WTC11 (cell line): ENCODE measurements at regions of chr1 and their contacts with region 1.

Region 1: GRCh38 chr1:226201029-226201593 is 14.6 kb upstream of the ACBD3 start:
- DNase-seq: peak; percentile 60
- ATAC-seq: peak; percentile 75
- H3K4me3 Mint-ChIP-seq: no peak overlapping the region
- H3K27ac Mint-ChIP-seq: no peak overlapping the region
- H3K4me1 Mint-ChIP-seq: peaks cover 19% of the 10 kb centered on the region
- H3K27me3 Mint-ChIP-seq: no peaks in the 10 kb centered on the region; the same call in 1 of the 2 replicates
- CTCF ChIP-seq: no peak

Region 2: GRCh38 chr1:225944951-225945350 is 256.2 kb before region 1 on chr1:
- CTCF ChIA-PET with region 1: no interaction called
- POLR2A ChIA-PET with region 1: no interaction called
- DNase-seq: no peak
- ATAC-seq: no peak
- H3K4me3 Mint-ChIP-seq: no peak overlapping the region
- H3K27ac Mint-ChIP-seq: peak overlapping the region; percentile 93
- H3K4me1 Mint-ChIP-seq: peaks cover 86% of the 10 kb centered on the region
- H3K27me3 Mint-ChIP-seq: peaks cover 94% of the 10 kb centered on the region
- CTCF ChIP-seq: no peak

Region 3: DNA sequence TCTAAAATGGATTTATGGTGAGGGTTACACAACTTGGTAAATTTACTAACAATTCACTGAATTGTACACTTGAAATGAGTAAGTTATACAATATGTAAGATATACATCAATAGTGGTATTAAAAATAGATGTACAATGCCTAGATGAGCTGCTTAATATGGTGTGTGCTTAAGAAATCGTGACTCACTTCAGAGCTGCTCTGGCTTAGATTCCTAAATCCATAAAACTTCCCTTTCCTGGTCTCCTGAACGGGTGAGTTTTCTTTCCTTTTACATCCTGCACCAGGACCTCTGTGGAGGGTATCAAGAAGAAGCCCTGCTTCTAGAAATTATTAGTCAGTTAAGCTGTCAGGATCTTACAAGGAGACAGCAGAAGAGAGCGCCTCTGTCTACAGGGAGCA is 108.1 kb before region 1 on chr1:
- CTCF ChIA-PET with region 1: no interaction called
- POLR2A ChIA-PET with region 1: no interaction called
- DNase-seq: no peak
- ATAC-seq: no peak
- H3K4me3 Mint-ChIP-seq: no peak overlapping the region
- H3K27ac Mint-ChIP-seq: no peak overlapping the region
- H3K4me1 Mint-ChIP-seq: peaks cover 6% of the 10 kb centered on the region; the same call in 1 of the 2 replicates
- H3K27me3 Mint-ChIP-seq: peaks cover 3% of the 10 kb centered on the region; the same call in 1 of the 2 replicates
- CTCF ChIP-seq: no peak

Region 4: DNA sequence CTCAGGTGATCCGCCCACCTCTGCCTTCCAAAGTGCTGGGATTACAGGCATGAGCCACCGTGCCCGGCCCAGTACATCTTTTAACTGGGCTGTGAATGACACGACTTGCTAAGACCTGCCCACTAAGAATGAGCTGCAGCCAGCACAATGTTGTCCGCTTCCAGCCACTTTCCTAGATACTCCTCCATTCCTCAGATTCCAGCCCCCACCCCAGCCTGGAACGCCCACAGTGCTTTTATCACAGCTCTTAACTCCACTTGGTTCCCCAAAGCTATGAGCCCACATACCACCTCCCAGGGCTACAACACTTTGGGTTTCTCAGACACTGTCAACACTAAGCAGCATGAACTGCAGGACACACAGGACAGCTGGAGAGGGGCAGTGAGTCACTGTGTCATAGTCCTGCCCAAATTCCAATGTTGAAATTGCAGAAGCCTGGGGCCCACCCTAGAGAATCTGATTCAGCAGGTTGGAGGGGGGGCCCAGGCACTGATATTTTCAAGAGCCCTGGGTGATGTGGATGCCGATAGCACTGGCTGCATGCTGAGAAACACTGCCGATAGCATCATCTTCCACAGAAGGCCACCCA is 72.5 kb before region 1 on chr1:
- CTCF ChIA-PET with region 1: interaction called, 92 read pairs
- POLR2A ChIA-PET with region 1: no interaction called
- DNase-seq: no peak
- ATAC-seq: no peak
- H3K4me3 Mint-ChIP-seq: no peak overlapping the region
- H3K27ac Mint-ChIP-seq: 0 out of 2 replicates have a peak overlapping the region, but pooled peaks have one; percentile 8
- H3K4me1 Mint-ChIP-seq: peaks cover 47% of the 10 kb centered on the region
- H3K27me3 Mint-ChIP-seq: no peaks in the 10 kb centered on the region; the same call in 1 of the 2 replicates
- CTCF ChIP-seq: no peak

Region 5: GRCh38 chr1:226186124-226187018 is 14.7 kb before region 1 on chr1 and contains the start of gene ACBD3:
- CTCF ChIA-PET with region 1: interaction called, 40 read pairs
- POLR2A ChIA-PET with region 1: interaction called, 3 read pairs
- DNase-seq: peak; percentile 82
- ATAC-seq: peak; percentile 93
- H3K4me3 Mint-ChIP-seq: peak within 1 kb of the TSS; percentile 97
- H3K27ac Mint-ChIP-seq: peak within 1 kb of the TSS; percentile 97
- H3K4me1 Mint-ChIP-seq: peaks cover 23% of the 10 kb centered on the region
- H3K27me3 Mint-ChIP-seq: no peaks in the 10 kb centered on the region
- CTCF ChIP-seq: no peak
- total RNA-seq, gene ACBD3: 30.5 to 38.9 TPM (median 31.1 TPM) in 3 replicates

Region 6: DNA sequence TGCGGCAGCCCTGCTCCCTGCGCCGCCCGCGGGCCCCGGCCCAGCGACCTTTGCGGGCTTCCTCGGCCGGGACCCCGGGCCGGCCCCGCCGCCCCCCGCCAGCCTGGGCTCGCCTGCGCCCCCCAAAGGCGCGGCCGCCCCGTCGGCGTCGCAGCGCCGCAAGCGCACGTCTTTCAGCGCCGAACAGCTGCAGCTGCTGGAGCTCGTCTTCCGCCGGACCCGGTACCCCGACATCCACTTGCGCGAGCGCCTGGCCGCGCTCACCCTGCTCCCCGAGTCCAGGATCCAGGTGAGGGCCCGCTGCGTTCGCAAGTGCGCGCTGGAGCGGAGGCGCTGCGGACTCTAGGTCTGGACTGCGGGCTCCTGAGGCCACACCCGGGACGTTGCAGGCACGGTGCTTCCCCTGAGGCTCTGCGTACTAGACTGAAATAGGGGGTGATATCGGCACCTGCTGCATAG is 22.7 kb after region 1 on chr1:
- CTCF ChIA-PET with region 1: interaction called, 25 read pairs
- POLR2A ChIA-PET with region 1: no interaction called
- DNase-seq: peak; percentile 69
- ATAC-seq: peak; percentile 52
- H3K4me3 Mint-ChIP-seq: peak overlapping the region; percentile 83
- H3K27ac Mint-ChIP-seq: no peak overlapping the region
- H3K4me1 Mint-ChIP-seq: peaks cover 29% of the 10 kb centered on the region
- H3K27me3 Mint-ChIP-seq: peaks cover 22% of the 10 kb centered on the region
- CTCF ChIP-seq: no peak

Region 7: GRCh38 chr1:226308723-226309315 is 107.7 kb after region 1 on chr1 and contains the start of gene LIN9:
- CTCF ChIA-PET with region 1: interaction called, 12 read pairs
- POLR2A ChIA-PET with region 1: no interaction called
- DNase-seq: peak; percentile 95
- ATAC-seq: peak; percentile 77
- H3K4me3 Mint-ChIP-seq: peak within 1 kb of the TSS; percentile 84
- H3K27ac Mint-ChIP-seq: peak within 1 kb of the TSS; percentile 72
- H3K4me1 Mint-ChIP-seq: peaks cover 39% of the 10 kb centered on the region
- H3K27me3 Mint-ChIP-seq: peaks cover 22% of the 10 kb centered on the region
- CTCF ChIP-seq: no peak
- total RNA-seq, gene LIN9: 10.4 to 15.7 TPM (median 10.7 TPM) in 3 replicates

Region 8: DNA sequence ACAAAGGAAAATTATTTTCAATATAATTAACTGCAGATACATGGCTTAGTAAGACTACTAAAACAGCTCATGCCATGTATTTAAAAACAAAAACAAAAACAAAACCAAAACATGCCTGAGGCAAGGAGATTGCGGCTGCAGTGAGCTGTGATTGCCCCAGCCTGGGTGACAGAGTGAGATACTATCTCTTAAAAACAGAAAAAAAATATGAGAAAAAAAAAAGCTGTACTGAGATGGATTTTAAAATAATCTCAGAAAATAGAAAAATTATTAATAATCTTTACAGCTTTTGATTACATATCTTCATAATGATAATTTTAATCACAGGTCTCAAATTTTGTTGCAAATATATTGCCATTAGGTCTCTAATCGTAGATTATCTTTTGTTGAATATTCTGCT is 131.8 kb after region 1 on chr1:
- CTCF ChIA-PET with region 1: interaction called, 43 read pairs
- POLR2A ChIA-PET with region 1: no interaction called
- DNase-seq: no peak
- ATAC-seq: peak; percentile 37
- H3K4me3 Mint-ChIP-seq: peak overlapping the region; percentile 46
- H3K27ac Mint-ChIP-seq: peak overlapping the region; percentile 75; the same call in 1 of the 2 replicates
- H3K4me1 Mint-ChIP-seq: peaks cover 7% of the 10 kb centered on the region
- H3K27me3 Mint-ChIP-seq: no peaks in the 10 kb centered on the region
- CTCF ChIP-seq: no peak